ENCODE measurements at regions of chr12 and their contacts with region 1.

Region 1: GRCh38 chr12:108884116-108885012 is 4.5 kb downstream of the DAO start:
- H3K4me3 ChIP-seq: no peak overlapping the region
- H3K27ac ChIP-seq: no peak overlapping the region
- H3K4me1 ChIP-seq: no peaks in the 10 kb centered on the region
- CTCF ChIP-seq: peak; percentile 56

Region 2: DNA sequence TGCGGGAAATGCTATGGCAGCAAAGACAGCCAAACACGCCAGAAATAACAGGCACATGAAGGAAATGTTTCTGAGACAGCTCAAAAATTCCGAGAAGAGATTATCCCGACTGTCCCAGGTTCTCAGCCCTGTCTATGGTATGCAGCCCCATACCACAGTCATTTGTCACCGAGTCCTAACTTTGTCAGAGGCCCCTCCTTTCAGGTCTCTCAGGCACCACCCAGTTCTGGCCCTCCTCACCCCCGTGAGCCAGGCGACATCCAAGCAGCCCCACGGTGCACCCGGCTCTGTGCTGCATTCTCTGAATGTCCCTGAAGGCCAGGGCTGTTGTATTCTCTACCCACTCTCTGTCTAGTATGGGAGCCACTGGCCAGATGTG is 51.0 kb before region 1 on chr12:
- CTCF ChIA-PET with region 1: interaction called, 10 read pairs
- POLR2A ChIA-PET with region 1: no interaction called
- H3K4me3 ChIP-seq: no peak overlapping the region
- H3K27ac ChIP-seq: no peak overlapping the region
- H3K4me1 ChIP-seq: 0 out of 2 replicates have a peak, but pooled peaks cover 2% of the 10 kb centered on the region
- CTCF ChIP-seq: no peak

Region 3: GRCh38 chr12:108856428-108857157 is 27.8 kb before region 1 on chr12:
- CTCF ChIA-PET with region 1: no interaction called
- POLR2A ChIA-PET with region 1: no interaction called
- H3K4me3 ChIP-seq: peak overlapping the region; percentile 74
- H3K27ac ChIP-seq: peak overlapping the region; percentile 84; the same call in 1 of the 2 replicates
- H3K4me1 ChIP-seq: no peaks in the 10 kb centered on the region
- CTCF ChIP-seq: no peak